ENCODE measurements at regions of chr11 and their contacts with region 1.

Region 1: GRCh38 chr11:79100093-79100910 is 340.5 kb downstream of the TENM4 start:
- DNase-seq: peak; percentile 68 to 73
- H3K4me3 ChIP-seq: no peak overlapping the region
- H3K4me3 Mint-ChIP-seq: no peak overlapping the region
- H3K27ac Mint-ChIP-seq: no peak overlapping the region
- H3K4me1 ChIP-seq: peaks cover 9% of the 10 kb centered on the region; the same call in 1 of the 2 replicates
- H3K4me1 Mint-ChIP-seq: peaks cover 6% of the 10 kb centered on the region
- H3K27me3 ChIP-seq: no peaks in the 10 kb centered on the region
- H3K27me3 Mint-ChIP-seq: peaks cover 6% of the 10 kb centered on the region
- CTCF ChIP-seq: peak; percentile 86 to 90

Region 2: GRCh38 chr11:78715639-78716311 is 384.5 kb before region 1 on chr11:
- CTCF ChIA-PET with region 1: interaction called, 14 read pairs
- POLR2A ChIA-PET with region 1: no interaction called
- intact Hi-C with region 1: no loop called
- DNase-seq: peak; percentile 85 to 88
- H3K4me3 ChIP-seq: no peak overlapping the region
- H3K4me3 Mint-ChIP-seq: no peak overlapping the region
- H3K27ac Mint-ChIP-seq: no peak overlapping the region
- H3K4me1 ChIP-seq: no peaks in the 10 kb centered on the region
- H3K4me1 Mint-ChIP-seq: no peaks in the 10 kb centered on the region
- H3K27me3 ChIP-seq: no peaks in the 10 kb centered on the region; the same call in 1 of the 2 replicates
- H3K27me3 Mint-ChIP-seq: peaks cover 16% of the 10 kb centered on the region
- CTCF ChIP-seq: peak; percentile 98 to 99

Region 3: DNA sequence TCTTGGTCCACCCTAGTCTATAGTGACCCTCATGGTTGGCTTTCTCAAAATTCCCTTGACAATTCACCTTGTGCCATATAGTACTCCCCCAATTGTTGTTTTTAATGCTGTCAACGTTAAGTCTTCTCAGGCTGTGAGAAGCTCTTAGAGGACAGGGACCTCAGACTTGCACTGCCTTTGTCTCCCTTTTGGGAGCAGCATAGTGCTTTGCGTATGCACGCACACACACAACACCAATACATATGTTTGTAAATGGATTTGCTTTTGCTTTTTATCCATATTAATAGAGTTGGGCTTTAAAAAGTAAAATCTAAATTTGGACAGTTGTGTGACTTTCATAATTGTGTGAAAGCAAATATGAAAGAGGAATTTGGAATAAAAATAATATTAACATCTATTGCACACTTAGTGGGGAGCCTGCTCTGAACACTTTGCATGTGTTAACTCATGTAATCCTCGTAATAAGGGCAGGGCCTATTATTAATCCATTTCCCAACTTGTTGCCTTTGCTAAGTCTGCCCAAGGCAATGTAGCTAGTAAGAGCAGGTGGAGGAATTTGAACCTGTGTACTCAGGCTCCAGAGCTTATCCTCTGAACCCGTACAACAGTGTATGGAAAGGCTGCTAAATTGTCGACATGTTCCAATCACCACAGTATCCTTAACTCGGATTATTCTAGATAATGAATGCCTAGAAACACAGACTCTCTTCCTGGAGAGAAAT is 267.9 kb before region 1 on chr11:
- CTCF ChIA-PET with region 1: interaction called, 5 read pairs
- POLR2A ChIA-PET with region 1: no interaction called
- intact Hi-C with region 1: loop called (anchors 1 kb)
- DNase-seq: no peak
- H3K4me3 ChIP-seq: no peak overlapping the region
- H3K4me3 Mint-ChIP-seq: no peak overlapping the region
- H3K27ac Mint-ChIP-seq: no peak overlapping the region
- H3K4me1 ChIP-seq: no peaks in the 10 kb centered on the region
- H3K4me1 Mint-ChIP-seq: peaks cover 6% of the 10 kb centered on the region
- H3K27me3 ChIP-seq: no peaks in the 10 kb centered on the region; the same call in 1 of the 2 replicates
- H3K27me3 Mint-ChIP-seq: peaks cover 20% of the 10 kb centered on the region
- CTCF ChIP-seq: peak in 1 of 2 experiments; percentile 22

Region 4: DNA sequence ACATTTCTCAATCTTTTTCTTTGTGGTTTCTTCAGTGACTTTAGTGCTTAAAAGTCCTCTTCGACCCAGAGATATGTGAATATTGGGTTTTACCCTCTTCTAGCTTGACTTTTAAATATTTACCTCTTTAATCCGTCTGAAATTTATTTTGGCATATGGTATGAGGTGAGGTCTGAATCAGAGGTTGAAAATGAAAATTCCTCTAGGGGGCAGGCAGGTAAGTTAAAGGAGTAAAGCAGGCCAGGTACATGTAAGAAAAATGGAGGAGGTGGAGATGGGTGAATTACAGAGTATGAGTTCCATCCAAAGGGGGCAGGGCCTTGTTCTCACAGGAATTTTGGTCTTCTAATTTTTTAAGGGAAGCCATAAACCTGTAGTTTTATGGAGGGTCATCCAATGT is 261.9 kb before region 1 on chr11:
- CTCF ChIA-PET with region 1: no interaction called
- POLR2A ChIA-PET with region 1: no interaction called
- intact Hi-C with region 1: loop called (anchors 1 kb)
- DNase-seq: peak in 1 of 2 experiments; percentile 51
- H3K4me3 ChIP-seq: no peak overlapping the region
- H3K4me3 Mint-ChIP-seq: no peak overlapping the region
- H3K27ac Mint-ChIP-seq: no peak overlapping the region
- H3K4me1 ChIP-seq: no peaks in the 10 kb centered on the region
- H3K4me1 Mint-ChIP-seq: peaks cover 6% of the 10 kb centered on the region
- H3K27me3 ChIP-seq: no peaks in the 10 kb centered on the region
- H3K27me3 Mint-ChIP-seq: peaks cover 25% of the 10 kb centered on the region
- CTCF ChIP-seq: peak; percentile 62 to 69

Region 5: GRCh38 chr11:79062814-79063762 is 37.2 kb before region 1 on chr11:
- CTCF ChIA-PET with region 1: interaction called, 23 read pairs
- POLR2A ChIA-PET with region 1: no interaction called
- intact Hi-C with region 1: loop called (anchors 1 kb)
- DNase-seq: peak; percentile 60 to 63
- H3K4me3 ChIP-seq: no peak overlapping the region
- H3K4me3 Mint-ChIP-seq: no peak overlapping the region
- H3K27ac Mint-ChIP-seq: no peak overlapping the region
- H3K4me1 ChIP-seq: no peaks in the 10 kb centered on the region
- H3K4me1 Mint-ChIP-seq: no peaks in the 10 kb centered on the region
- H3K27me3 ChIP-seq: no peaks in the 10 kb centered on the region
- H3K27me3 Mint-ChIP-seq: no peaks in the 10 kb centered on the region
- CTCF ChIP-seq: peak; percentile 72 to 81

Region 6: DNA sequence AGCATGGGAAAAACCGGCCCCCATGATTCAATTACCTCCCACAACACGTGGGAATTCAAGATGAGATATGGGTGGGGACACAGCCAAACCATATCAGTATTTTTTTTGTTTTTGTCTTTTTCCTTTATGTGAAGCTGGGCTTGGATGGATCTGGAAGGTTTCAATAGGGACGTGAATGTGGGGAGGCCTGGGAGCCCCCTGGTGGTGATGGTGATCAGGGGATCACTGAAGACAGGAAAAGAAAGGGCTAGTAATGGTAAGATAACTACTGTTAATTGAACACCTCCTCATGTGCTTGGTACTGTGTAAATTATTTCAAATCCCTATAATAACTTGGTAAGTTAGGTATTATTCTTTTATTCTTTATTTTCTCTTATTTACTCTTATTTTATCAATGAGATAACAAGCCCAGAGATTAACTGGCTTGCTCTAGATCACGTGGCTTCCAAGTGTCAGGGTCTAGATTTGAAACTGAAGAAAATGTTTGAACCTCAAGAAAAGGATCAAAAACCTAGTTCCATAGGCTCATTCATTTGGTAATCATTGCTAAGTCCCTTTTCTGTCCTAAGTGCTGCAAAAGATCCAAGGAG is 23.7 kb before region 1 on chr11:
- CTCF ChIA-PET with region 1: interaction called, 13 read pairs
- POLR2A ChIA-PET with region 1: no interaction called
- intact Hi-C with region 1: no loop called
- DNase-seq: peak; percentile 60 to 77
- H3K4me3 ChIP-seq: no peak overlapping the region
- H3K4me3 Mint-ChIP-seq: no peak overlapping the region
- H3K27ac Mint-ChIP-seq: no peak overlapping the region
- H3K4me1 ChIP-seq: no peaks in the 10 kb centered on the region
- H3K4me1 Mint-ChIP-seq: no peaks in the 10 kb centered on the region
- H3K27me3 ChIP-seq: no peaks in the 10 kb centered on the region
- H3K27me3 Mint-ChIP-seq: no peaks in the 10 kb centered on the region
- CTCF ChIP-seq: peak; percentile 90 to 97

Region 7: GRCh38 chr11:79087238-79087960 is 12.9 kb before region 1 on chr11:
- CTCF ChIA-PET with region 1: interaction called, 39 read pairs
- POLR2A ChIA-PET with region 1: interaction called, 10 read pairs
- intact Hi-C with region 1: loop called (anchors 1 kb)
- DNase-seq: peak; percentile 72 to 84
- H3K4me3 ChIP-seq: no peak overlapping the region
- H3K4me3 Mint-ChIP-seq: peak overlapping the region; percentile 15
- H3K27ac Mint-ChIP-seq: peak overlapping the region; percentile 89
- H3K4me1 ChIP-seq: peaks cover 40% of the 10 kb centered on the region
- H3K4me1 Mint-ChIP-seq: peaks cover 28% of the 10 kb centered on the region
- H3K27me3 ChIP-seq: no peaks in the 10 kb centered on the region
- H3K27me3 Mint-ChIP-seq: no peaks in the 10 kb centered on the region
- CTCF ChIP-seq: no peak

Measured in Caco-2 (cell line).